Right cardiac atrium (tissue), 5 donors: ENCODE measurements at regions of chr22 and their contacts with region 1.

Region 1: GRCh38 chr22:26589845-26590736 is at the start of gene TPST2:
- DNase-seq: peak; percentile 80 to 93 (median 92)
- ATAC-seq: peak; percentile 93 to 95
- H3K4me3 ChIP-seq: peak within 1 kb of the TSS; percentile 100
- H3K27ac ChIP-seq: peak within 1 kb of the TSS; percentile 92
- H3K4me1 ChIP-seq: peaks cover 7% of the 10 kb centered on the region
- H3K27me3 ChIP-seq: no peaks in the 10 kb centered on the region
- total RNA-seq, gene TPST2: 30.5 to 55.2 (median 36.9) TPM

Region 2: GRCh38 chr22:26502688-26503561 is 87.2 kb before region 1 on chr22:
- intact Hi-C with region 1: loop called in 1 of 4 experiments (anchors 5 kb)
- DNase-seq: peak in 1 of 3 donors; percentile 63
- ATAC-seq: peak; percentile 73 to 83
- H3K4me3 ChIP-seq: no peak overlapping the region
- H3K27ac ChIP-seq: peak overlapping the region; percentile 84
- H3K4me1 ChIP-seq: no peaks in the 10 kb centered on the region
- H3K27me3 ChIP-seq: no peaks in the 10 kb centered on the region

Region 3: GRCh38 chr22:26511857-26512793 is 78.0 kb before region 1 on chr22 and contains the start of gene TFIP11:
- intact Hi-C with region 1: loop called in 1 of 4 experiments (anchors 10 kb)
- DNase-seq: peak; percentile 95 to 98 (median 98)
- ATAC-seq: peak; percentile 97 to 98
- H3K4me3 ChIP-seq: peak within 1 kb of the TSS; percentile 67
- H3K27ac ChIP-seq: peak within 1 kb of the TSS; percentile 36
- H3K4me1 ChIP-seq: peaks cover 4% of the 10 kb centered on the region
- H3K27me3 ChIP-seq: no peaks in the 10 kb centered on the region
- total RNA-seq, gene TFIP11: 19.8 to 28.7 (median 25.4) TPM

Region 4: GRCh38 chr22:26529345-26529744 is 60.7 kb before region 1 on chr22:
- intact Hi-C with region 1: loop called in 1 of 4 experiments (anchors 10 kb)
- DNase-seq: no peak
- ATAC-seq: peak in 1 of 2 donors; percentile 33
- H3K4me3 ChIP-seq: no peak overlapping the region
- H3K27ac ChIP-seq: no peak overlapping the region
- H3K4me1 ChIP-seq: peaks cover 3% of the 10 kb centered on the region
- H3K27me3 ChIP-seq: no peaks in the 10 kb centered on the region

Region 5: DNA sequence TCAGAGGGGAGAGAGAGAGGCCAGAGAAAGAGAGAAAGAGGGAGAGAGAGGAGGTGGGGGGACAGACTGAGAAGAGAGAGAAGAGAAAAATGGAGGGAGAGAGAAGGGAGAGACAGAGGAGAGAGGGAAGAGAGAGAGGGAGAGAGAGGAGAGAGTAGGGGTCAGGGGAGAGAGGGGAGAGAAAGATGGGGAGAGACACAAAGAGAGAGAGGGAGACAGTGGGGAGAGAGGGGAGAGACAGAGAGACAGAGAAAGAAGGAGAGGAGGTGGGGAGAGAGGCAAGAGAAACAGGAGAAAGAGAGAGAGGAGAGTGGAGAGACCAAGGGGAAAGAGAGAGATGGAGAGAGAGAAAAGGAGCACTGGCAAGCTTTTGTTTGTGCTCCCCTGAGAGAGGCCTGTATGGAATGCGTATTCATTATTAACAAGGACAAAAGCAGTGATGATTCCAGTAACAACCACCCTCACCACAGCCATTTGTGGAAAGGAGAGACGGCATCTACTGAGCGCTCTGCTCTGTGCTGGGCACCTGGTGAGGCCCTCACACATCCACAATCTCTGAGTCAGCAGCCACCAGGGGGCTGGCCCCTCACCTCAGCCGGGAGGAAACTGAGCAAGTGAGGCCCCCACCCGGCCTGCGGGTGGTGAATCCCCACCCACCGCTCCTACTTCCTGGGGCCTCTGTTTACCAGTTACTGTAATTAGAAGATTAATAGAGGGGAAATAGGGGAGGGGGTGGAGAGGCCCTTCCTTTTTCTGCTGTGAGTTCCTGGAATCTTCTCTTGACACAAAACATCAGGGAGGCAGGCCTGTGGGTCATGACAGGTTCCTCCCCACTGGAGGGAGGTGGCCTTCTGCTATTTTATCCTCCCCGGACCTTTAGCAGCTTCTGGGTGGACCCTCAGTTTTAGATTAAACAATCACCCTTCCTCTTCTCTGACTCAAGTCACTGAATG is 52.6 kb after region 1 on chr22:
- intact Hi-C with region 1: no loop called
- DNase-seq: peak in 2 of 3 donors; percentile 63 to 79
- ATAC-seq: peak; percentile 3 to 65
- H3K4me3 ChIP-seq: no peak overlapping the region
- H3K27ac ChIP-seq: peak overlapping the region; percentile 63
- H3K4me1 ChIP-seq: peaks cover 3% of the 10 kb centered on the region
- H3K27me3 ChIP-seq: no peaks in the 10 kb centered on the region